ENCODE measurements at regions of chr1 and their contacts with region 1.

Region 1: DNA sequence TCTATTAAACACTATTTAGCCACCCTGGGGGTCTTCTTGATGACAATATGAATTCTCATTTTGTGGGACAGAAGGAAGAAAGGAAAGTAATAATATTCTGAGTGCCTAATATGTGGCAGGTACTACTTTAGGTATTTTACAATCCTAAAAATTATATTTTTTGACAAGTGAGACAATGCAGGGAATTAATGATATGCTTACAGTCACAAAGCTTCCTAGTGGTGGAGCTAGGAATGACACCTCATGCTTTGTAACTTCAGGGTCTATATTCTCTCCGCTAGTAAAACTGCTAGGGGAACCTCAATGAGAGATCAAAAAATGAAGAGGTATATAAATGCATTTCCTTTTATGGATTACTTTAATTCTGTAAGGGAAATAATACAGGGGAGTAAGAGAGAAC is 44.3 kb downstream of the TPR start:
- DNase-seq: no peak
- H3K4me3 ChIP-seq: no peak overlapping the region
- H3K27ac ChIP-seq: no peak overlapping the region
- H3K4me1 ChIP-seq: no peaks in the 10 kb centered on the region
- H3K27me3 ChIP-seq: no peaks in the 10 kb centered on the region
- CTCF ChIP-seq: peak in 3 of 5 experiments; percentile 18 to 23 (median 19)
- EP300 ChIP-seq: no peak
- POLR2A ChIP-seq: no peak

Region 2: GRCh38 chr1:185033686-185034085 is 1297.1 kb before region 1 on chr1:
- in situ Hi-C with region 1: no loop called
- intact Hi-C with region 1: no loop called
- DNase-seq: no peak
- H3K4me3 ChIP-seq: no peak overlapping the region
- H3K27ac ChIP-seq: no peak overlapping the region
- H3K4me1 ChIP-seq: no peaks in the 10 kb centered on the region
- H3K27me3 ChIP-seq: no peaks in the 10 kb centered on the region
- CTCF ChIP-seq: no peak
- EP300 ChIP-seq: no peak
- POLR2A ChIP-seq: no peak

Region 3: GRCh38 chr1:186102557-186103148 is 228.1 kb before region 1 on chr1:
- in situ Hi-C with region 1: no loop called
- intact Hi-C with region 1: no loop called
- DNase-seq: no peak
- H3K4me3 ChIP-seq: no peak overlapping the region
- H3K27ac ChIP-seq: no peak overlapping the region
- H3K4me1 ChIP-seq: no peaks in the 10 kb centered on the region
- H3K27me3 ChIP-seq: no peaks in the 10 kb centered on the region
- CTCF ChIP-seq: no peak
- EP300 ChIP-seq: no peak
- POLR2A ChIP-seq: no peak

Region 4: GRCh38 chr1:186340772-186341171 is 10.0 kb after region 1 on chr1:
- in situ Hi-C with region 1: no loop called
- intact Hi-C with region 1: loop called (anchors 1 kb)
- DNase-seq: no peak
- H3K4me3 ChIP-seq: no peak overlapping the region
- H3K27ac ChIP-seq: no peak overlapping the region
- H3K4me1 ChIP-seq: no peaks in the 10 kb centered on the region
- H3K27me3 ChIP-seq: no peaks in the 10 kb centered on the region
- CTCF ChIP-seq: no peak
- EP300 ChIP-seq: no peak
- POLR2A ChIP-seq: no peak